PC-3 (cell line): ENCODE measurements at regions of chr7 and their contacts with region 1.

Region 1: GRCh38 chr7:96596120-96596826 is 113.4 kb downstream of the SEM1 start:
- DNase-seq: peak; percentile 32
- ATAC-seq: peak; percentile 66
- H3K4me3 ChIP-seq: no peak overlapping the region
- H3K27ac ChIP-seq: no peak overlapping the region
- H3K4me1 ChIP-seq: no peaks in the 10 kb centered on the region
- H3K27me3 ChIP-seq: no peaks in the 10 kb centered on the region
- CTCF ChIP-seq: peak; percentile 47

Region 2: GRCh38 chr7:96709381-96710228 is 113.3 kb after region 1 on chr7 and contains the start of gene SEM1:
- CTCF ChIA-PET with region 1: no interaction called
- POLR2A ChIA-PET with region 1: no interaction called
- intact Hi-C with region 1: loop called (anchors 5 kb)
- DNase-seq: peak; percentile 81
- ATAC-seq: peak; percentile 96
- H3K4me3 ChIP-seq: peak within 1 kb of the TSS; percentile 92
- H3K27ac ChIP-seq: peak within 1 kb of the TSS; percentile 74
- H3K4me1 ChIP-seq: peaks cover 17% of the 10 kb centered on the region
- H3K27me3 ChIP-seq: no peaks in the 10 kb centered on the region
- CTCF ChIP-seq: no peak
- total RNA-seq, gene SEM1: 263 and 292 TPM in 2 replicates